Activated CD4-positive, alpha-beta T cell treated with anti-CD3 and anti-CD28 coated beads for 36 hours (primary cell): ENCODE measurements at regions of chr9 and their contacts with region 1.

Region 1: GRCh38 chr9:136700959-136701667 is 11.3 kb upstream of the DIPK1B start:
- DNase-seq: peak; percentile 92
- ATAC-seq: peak; percentile 97
- H3K4me3 Mint-ChIP-seq: peak overlapping the region; percentile 62
- H3K27ac Mint-ChIP-seq: peak overlapping the region; percentile 91
- H3K4me1 Mint-ChIP-seq: peaks cover 20% of the 10 kb centered on the region
- H3K27me3 Mint-ChIP-seq: peaks cover 20% of the 10 kb centered on the region

Region 2: DNA sequence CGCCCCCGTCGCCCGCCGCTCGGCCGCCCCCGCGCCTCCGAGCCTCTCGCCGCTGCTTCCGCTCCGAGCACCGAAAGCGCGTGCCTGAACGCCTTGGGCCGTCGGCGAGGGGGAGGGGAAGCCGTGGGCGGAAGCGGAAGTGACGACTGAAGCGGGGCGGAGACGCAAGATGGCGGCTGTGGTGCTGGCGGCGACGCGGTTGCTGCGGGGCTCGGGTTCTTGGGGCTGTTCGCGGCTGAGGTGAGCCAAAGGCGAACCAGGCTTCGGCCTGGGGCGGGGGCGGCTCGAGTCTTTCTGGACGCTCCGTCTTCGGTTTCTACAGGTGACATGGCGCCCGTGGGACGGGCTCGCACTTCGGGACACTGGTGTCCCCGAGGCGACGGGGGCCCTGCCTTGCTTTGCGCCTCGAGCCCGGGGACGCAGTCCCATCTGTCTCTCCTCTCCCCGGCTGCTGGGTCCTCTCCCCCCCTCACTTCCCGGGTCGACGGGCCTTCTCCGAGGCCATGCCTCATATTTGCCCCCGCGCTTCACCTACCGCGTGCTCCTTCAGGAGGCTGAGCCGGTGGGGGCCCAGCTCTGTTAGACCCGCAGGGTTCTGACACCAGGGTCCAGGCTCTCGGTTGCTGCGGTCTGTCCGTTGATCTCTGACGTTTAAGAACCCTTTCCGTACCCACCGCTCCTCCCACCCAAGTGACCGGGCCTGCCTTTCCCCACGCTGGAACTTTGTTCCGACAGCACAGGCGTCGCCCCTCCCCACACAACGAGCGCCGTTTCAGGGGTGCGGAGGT is 290.4 kb before region 1 on chr9 and contains the starts of genes ENTR1 and PMPCA:
- CTCF ChIA-PET with region 1: no interaction called
- POLR2A ChIA-PET with region 1: no interaction called
- intact Hi-C with region 1: loop called in 1 of 2 experiments (anchors 1 kb)
- DNase-seq: peak; percentile 98
- ATAC-seq: peak; percentile 75
- H3K4me3 Mint-ChIP-seq: peak within 1 kb of the TSS; percentile 90
- H3K27ac Mint-ChIP-seq: peak within 1 kb of the TSS; percentile 94
- H3K4me1 Mint-ChIP-seq: peaks cover 49% of the 10 kb centered on the region
- H3K27me3 Mint-ChIP-seq: no peaks in the 10 kb centered on the region
- total RNA-seq, gene ENTR1: 57.2 to 67.7 TPM
- total RNA-seq, gene PMPCA: 88.0 to 113 TPM

Region 3: DNA sequence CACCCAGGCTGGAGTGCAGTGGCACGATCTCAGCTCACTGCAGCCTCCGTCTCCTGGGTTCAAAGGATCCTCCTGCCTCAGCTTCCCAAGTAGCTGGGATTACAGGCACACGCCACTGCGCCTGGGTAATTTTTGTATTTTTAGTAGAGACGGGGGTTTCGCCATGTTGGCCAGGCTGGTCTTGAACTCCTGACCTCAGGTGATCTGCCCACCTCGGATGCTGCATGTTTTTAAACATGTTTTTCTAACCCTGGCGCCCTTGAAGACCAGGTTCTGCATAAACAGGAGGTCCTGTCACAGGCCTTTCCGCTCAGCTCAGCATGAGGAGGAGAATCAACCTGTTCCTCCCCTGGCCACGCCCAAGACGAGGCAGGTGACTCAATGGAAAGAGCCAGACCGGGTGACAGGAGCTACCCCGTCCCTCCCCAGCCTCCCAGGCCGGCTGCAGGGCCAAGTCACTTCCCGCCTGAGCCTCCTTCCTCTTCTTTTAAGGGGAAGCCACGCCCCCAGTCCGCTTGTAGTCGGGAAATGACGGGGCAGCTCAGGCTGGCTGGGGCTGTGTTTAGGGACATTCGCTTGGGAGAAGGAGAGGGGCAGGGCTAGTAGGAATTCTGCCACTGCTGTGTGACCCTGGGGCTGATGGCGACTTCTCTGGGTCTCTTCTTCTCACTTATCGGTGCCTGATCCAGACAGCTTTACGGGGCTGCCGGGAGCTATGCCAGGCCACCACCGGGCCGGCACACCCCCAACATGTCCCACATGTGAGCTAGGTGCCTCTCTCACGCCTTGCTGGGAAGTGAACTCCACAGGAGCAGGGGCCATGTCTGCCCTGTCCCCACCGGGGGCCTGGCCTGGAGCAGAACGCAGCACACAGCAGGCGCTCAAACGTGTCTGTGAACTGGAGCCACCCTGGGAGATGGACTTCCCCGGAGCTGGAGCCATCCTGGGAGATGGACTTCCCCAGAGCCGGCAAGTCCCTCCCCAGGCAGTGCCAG is 161.4 kb before region 1 on chr9:
- CTCF ChIA-PET with region 1: no interaction called
- POLR2A ChIA-PET with region 1: no interaction called
- intact Hi-C with region 1: loop called in 1 of 2 experiments (anchors 1 kb)
- DNase-seq: peak; percentile 99
- ATAC-seq: peak; percentile 81
- H3K4me3 Mint-ChIP-seq: peak overlapping the region; percentile 65
- H3K27ac Mint-ChIP-seq: peak overlapping the region; percentile 99
- H3K4me1 Mint-ChIP-seq: peaks cover 74% of the 10 kb centered on the region
- H3K27me3 Mint-ChIP-seq: no peaks in the 10 kb centered on the region

Region 4: GRCh38 chr9:136686794-136687711 is 14.1 kb before region 1 on chr9 and contains the start of gene AGPAT2:
- CTCF ChIA-PET with region 1: interaction called, 4 read pairs
- POLR2A ChIA-PET with region 1: interaction called, 6 read pairs
- intact Hi-C with region 1: loop called in 1 of 2 experiments (anchors 1 kb)
- DNase-seq: peak; percentile 84
- ATAC-seq: peak; percentile 91
- H3K4me3 Mint-ChIP-seq: peak within 1 kb of the TSS; percentile 70
- H3K27ac Mint-ChIP-seq: no peak within 1 kb of the TSS
- H3K4me1 Mint-ChIP-seq: no peaks in the 10 kb centered on the region
- H3K27me3 Mint-ChIP-seq: peaks cover 2% of the 10 kb centered on the region
- total RNA-seq, gene AGPAT2: 9.0 to 10.4 TPM

Region 5: DNA sequence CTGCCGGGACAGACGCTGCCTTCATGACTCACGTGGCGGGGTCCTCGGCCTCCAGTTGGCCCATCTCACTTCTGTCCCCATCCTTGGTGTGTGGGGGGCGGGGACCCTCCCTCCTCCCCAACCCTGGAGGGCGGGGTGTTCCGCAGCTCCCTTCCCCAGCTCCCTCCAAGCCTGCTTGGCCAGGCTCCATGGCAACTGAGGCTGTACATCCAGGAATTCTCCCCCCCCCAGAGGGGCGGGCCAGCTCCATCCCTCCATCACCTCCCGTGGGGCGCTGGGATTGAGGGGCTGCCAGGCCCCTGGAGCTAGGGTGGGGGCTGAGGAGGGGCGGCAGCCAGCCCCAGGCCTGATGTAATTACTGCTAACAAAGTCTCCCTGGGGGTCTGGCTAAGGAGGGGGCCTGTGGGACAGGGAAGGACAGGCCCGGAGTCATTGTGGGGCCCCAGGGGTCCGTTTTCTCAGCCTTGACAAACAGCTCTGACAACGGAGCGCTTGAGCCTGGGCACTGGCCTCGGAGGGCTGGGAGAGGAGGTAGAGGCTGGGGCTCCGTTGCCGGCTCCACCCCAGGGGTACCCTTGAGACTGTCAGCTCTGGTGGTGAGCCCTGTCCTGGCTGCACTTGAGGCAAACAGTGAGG is 19.3 kb after region 1 on chr9:
- CTCF ChIA-PET with region 1: no interaction called
- POLR2A ChIA-PET with region 1: no interaction called
- intact Hi-C with region 1: no loop called
- DNase-seq: no peak
- ATAC-seq: no peak
- H3K4me3 Mint-ChIP-seq: no peak overlapping the region
- H3K27ac Mint-ChIP-seq: no peak overlapping the region
- H3K4me1 Mint-ChIP-seq: peaks cover 8% of the 10 kb centered on the region
- H3K27me3 Mint-ChIP-seq: peaks cover 4% of the 10 kb centered on the region